Heart left ventricle (tissue), 16 donors: ENCODE measurements at regions of chr6 and their contacts with region 1.

Region 1: GRCh38 chr6:47413752-47414422 is 63.7 kb upstream of the CD2AP start:
- DNase-seq: peak in 2 of 5 donors; percentile 28 to 29
- ATAC-seq: peak in 3 of 4 donors; percentile 78 to 88 (median 87)
- H3K4me3 ChIP-seq: peak overlapping the region in 11 of 12 donors; percentile 9 to 57 (median 45)
- H3K27ac ChIP-seq: peak overlapping the region in 8 of 12 donors; percentile 6 to 81 (median 48)
- H3K4me1 ChIP-seq: peaks cover 0 to 23% (median 0%) of the 10 kb centered on the region in 12 donors
- H3K27me3 ChIP-seq: no peaks in the 10 kb centered on the region
- CTCF ChIP-seq: peak; percentile 83 to 94 (median 90)
- POLR2A ChIP-seq: no peak

Region 2: GRCh38 chr6:47477497-47478232 is 63.8 kb after region 1 on chr6 and contains the start of gene CD2AP:
- intact Hi-C with region 1: loop called in 6 of 10 experiments (anchors 2 to 10 kb)
- DNase-seq: peak; percentile 85 to 92 (median 88)
- ATAC-seq: peak; percentile 86 to 97 (median 95)
- H3K4me3 ChIP-seq: peak within 1 kb of the TSS; percentile 66 to 95 (median 86)
- H3K27ac ChIP-seq: peak within 1 kb of the TSS; percentile 87 to 98 (median 94)
- H3K4me1 ChIP-seq: peaks cover 0 to 31% (median 16%) of the 10 kb centered on the region in 12 donors
- H3K27me3 ChIP-seq: no peaks in the 10 kb centered on the region
- CTCF ChIP-seq: peak in 6 of 12 donors; percentile 15 to 41 (median 29)
- POLR2A ChIP-seq: peak in 1 of 2 donors; percentile 62
- total RNA-seq, gene CD2AP: 9.7 to 18.0 (median 13.7) TPM

Region 3: DNA sequence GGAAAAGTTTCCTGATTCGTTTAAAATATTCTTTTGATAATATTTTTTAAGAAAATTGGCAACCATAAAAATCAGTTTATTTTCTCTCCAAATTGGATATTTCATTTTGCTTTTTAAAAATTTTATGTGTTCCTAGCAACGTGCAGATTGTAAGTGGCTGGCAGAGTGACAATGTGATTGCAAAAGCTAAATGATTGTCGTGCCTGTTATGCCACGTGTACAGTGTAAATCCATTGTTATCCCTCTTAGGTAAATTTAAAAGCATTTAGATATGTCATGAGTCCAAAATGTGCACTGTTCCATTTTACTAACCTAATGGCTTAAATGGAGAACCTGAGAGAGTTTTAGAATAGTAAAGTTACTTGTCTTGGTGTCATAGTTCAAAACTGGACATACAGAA is 190.1 kb after region 1 on chr6:
- intact Hi-C with region 1: loop called in 6 of 10 experiments (anchors 5 to 10 kb)
- DNase-seq: no peak
- ATAC-seq: peak in 1 of 4 donors; percentile 37
- H3K4me3 ChIP-seq: no peak overlapping the region
- H3K27ac ChIP-seq: no peak overlapping the region
- H3K4me1 ChIP-seq: peaks cover 0 to 17% (median 3%) of the 10 kb centered on the region in 12 donors
- H3K27me3 ChIP-seq: no peaks in the 10 kb centered on the region
- CTCF ChIP-seq: no peak
- POLR2A ChIP-seq: no peak

Region 4: GRCh38 chr6:47631269-47631772 is 217.4 kb after region 1 on chr6:
- intact Hi-C with region 1: loop called in 5 of 10 experiments (anchors 1 to 10 kb)
- DNase-seq: no peak
- ATAC-seq: peak; percentile 49 to 73 (median 67)
- H3K4me3 ChIP-seq: no peak overlapping the region
- H3K27ac ChIP-seq: peak overlapping the region in 3 of 12 donors; percentile 2 to 15 (median 8)
- H3K4me1 ChIP-seq: peaks cover 0 to 25% (median 16%) of the 10 kb centered on the region in 12 donors
- H3K27me3 ChIP-seq: no peaks in the 10 kb centered on the region
- CTCF ChIP-seq: peak; percentile 53 to 84 (median 71)
- POLR2A ChIP-seq: no peak

Region 5: DNA sequence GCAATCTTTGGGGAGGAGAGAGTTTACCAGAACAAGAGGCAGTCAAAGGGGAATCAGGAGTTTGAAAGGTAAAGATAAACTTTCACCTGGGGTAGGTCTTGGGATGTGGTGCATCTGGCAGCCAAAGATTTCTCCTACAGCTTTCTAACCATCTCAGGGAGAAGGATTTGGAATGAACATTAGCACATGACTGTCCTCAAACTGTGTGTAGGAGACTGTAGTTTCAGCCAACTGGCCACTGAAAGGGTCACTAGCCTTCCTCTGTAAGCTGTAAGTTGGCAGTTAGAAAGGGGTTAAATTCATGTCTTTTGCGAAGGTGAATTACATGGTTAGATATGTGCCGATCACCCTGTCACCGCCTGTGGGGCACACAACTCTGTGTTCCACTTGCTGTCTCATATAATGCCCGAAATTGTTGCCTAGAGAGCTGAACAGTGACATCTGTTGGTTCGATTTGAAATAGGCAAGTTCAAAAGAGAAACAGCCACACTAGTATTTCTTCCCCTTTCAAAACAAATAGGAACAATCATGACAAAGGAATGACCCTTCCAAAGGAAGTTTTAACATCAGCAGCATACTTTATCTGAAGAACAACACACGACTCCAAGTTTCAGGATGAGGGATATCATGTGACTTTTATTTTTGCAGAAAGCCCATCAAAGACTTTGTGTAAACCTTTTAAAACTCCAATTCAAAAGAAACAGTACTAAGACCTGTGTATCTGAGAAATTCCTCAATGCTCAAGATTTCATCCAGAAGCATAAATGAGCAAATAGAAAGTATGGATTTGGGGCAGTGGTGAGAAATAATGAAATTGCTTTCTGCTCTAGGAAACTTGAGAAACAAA is 366.8 kb after region 1 on chr6:
- intact Hi-C with region 1: loop called in 8 of 10 experiments (anchors 1 to 5 kb)
- DNase-seq: peak in 2 of 5 donors; percentile 14 to 28
- ATAC-seq: peak in 3 of 4 donors; percentile 84 to 86 (median 86)
- H3K4me3 ChIP-seq: peak overlapping the region in 1 of 12 donors; percentile 19
- H3K27ac ChIP-seq: no peak overlapping the region
- H3K4me1 ChIP-seq: peaks cover 0 to 7% (median 3%) of the 10 kb centered on the region in 12 donors
- H3K27me3 ChIP-seq: no peaks in the 10 kb centered on the region
- CTCF ChIP-seq: peak; percentile 48 to 78 (median 63)
- POLR2A ChIP-seq: no peak